T-cell (primary cell): ENCODE measurements at regions of chr13 and their contacts with region 1.

Region 1: DNA sequence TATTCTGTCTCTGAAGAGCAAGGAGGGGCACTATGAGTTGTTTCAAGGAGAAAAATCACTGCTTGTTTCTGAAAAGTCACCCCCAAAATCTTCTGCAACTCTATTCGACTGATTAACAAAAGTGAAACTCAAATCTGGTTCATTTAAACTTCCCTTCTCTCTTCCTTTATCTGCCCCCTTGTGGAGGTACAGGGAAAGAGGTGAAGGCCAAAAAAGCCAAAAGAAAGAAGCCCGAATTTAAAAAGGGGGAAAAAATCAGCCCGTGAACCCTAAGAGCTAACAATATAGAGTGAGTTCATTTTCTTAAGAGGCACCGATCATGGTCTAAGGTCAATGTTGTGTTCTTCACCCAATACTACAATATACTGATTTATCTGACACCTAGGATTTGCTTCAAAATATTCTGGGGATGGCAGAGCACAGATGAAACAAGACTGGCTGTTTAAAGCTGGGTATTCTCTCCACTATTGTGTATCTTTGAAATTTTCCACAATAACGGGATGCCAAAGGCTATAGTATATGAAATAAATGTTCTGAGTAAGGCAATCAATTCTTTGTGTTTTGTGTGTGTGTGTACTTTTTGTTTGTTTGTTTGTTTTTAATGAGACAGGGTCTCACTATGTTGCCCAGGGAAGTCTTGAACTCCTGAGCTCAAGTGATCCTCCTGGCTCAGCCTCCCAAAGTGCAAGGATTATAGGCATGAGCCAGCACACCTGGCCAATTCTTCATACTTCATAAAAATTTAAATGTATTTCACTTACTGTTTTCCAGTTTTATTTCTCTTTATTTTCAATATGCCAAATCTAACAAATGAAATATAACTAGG is 55.0 kb upstream of the EEF1AKMT1 start:
- DNase-seq: peak in 27 of 35 experiments; percentile 2 to 78 (median 23)
- ATAC-seq: peak; percentile 65 to 86 (median 80)
- H3K4me3 ChIP-seq: no peak overlapping the region
- H3K4me3 Mint-ChIP-seq: peak overlapping the region; percentile 10 to 44 (median 32)
- H3K27ac ChIP-seq: peak overlapping the region; percentile 42
- H3K27ac Mint-ChIP-seq: peak overlapping the region; percentile 62 to 85
- H3K4me1 ChIP-seq: peaks cover 0 to 2% of the 10 kb centered on the region in 2 experiments
- H3K4me1 Mint-ChIP-seq: peaks cover 7 to 17% (median 8%) of the 10 kb centered on the region in 3 donors
- H3K27me3 ChIP-seq: no peaks in the 10 kb centered on the region
- H3K27me3 Mint-ChIP-seq: no peaks in the 10 kb centered on the region

Region 2: DNA sequence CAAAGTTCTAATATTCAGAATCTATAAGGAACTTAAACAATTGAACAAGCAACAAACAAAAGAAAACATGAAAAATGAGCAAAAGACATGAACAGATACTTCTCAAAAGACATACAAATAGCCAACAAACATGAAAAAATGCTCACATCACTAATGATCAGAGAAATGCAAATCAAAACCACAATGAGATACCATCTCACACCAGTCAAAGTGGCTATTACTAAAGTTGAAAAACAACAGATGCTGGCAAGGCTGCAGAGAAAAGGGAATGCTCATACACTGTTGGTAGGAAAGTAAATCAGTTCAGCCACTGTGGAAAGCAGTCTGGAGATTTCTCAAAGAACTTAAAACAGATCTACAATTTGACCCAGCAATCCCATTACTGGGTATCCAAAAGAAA is 377.4 kb before region 1 on chr13:
- CTCF ChIA-PET with region 1: no interaction called
- POLR2A ChIA-PET with region 1: interaction called in 1 of 2 experiments, 12 read pairs
- DNase-seq: no peak
- ATAC-seq: no peak
- H3K4me3 ChIP-seq: no peak overlapping the region
- H3K4me3 Mint-ChIP-seq: no peak overlapping the region
- H3K27ac ChIP-seq: no peak overlapping the region
- H3K27ac Mint-ChIP-seq: no peak overlapping the region
- H3K4me1 ChIP-seq: no peaks in the 10 kb centered on the region
- H3K4me1 Mint-ChIP-seq: peaks cover 11 to 18% (median 14%) of the 10 kb centered on the region in 3 donors
- H3K27me3 ChIP-seq: no peaks in the 10 kb centered on the region
- H3K27me3 Mint-ChIP-seq: no peaks in the 10 kb centered on the region

Region 3: DNA sequence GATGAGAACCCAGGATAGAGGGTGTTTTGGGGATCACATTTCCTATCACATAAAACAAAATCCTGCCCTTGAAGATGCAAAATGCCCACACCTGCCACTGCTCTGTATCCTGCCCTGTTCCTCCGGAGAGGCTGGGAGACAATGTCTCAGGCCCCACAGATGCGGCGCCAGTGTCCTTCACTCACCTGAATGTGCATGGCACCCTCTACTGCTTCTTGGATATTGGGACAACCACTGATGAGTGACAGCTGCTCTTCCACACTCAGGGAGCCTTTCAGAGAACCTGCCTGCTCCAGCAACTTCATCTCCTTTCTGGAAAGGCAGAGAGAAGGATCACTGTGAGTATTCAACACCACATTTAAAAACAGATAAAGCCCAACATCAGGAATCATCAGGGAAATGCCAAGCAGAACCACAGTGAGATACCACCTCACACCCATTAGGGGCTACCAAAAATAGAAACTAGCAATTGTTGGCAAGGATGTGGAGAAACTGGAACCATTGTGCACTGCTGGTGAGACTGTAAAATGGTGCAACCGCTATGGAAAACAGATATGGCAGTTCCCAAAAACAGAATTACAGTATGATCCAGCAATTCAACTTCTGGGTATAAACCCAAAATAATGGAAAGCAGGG is 339.4 kb before region 1 on chr13:
- CTCF ChIA-PET with region 1: interaction called, 10 to 73 read pairs
- POLR2A ChIA-PET with region 1: interaction called in 1 of 2 experiments, 3 read pairs
- DNase-seq: peak in 16 of 35 experiments; percentile 10 to 73 (median 42)
- ATAC-seq: peak in 3 of 4 experiments; percentile 65 to 83 (median 73)
- H3K4me3 ChIP-seq: no peak overlapping the region
- H3K4me3 Mint-ChIP-seq: no peak overlapping the region
- H3K27ac ChIP-seq: no peak overlapping the region
- H3K27ac Mint-ChIP-seq: no peak overlapping the region
- H3K4me1 ChIP-seq: peaks cover 3 to 4% of the 10 kb centered on the region in 2 experiments
- H3K4me1 Mint-ChIP-seq: peaks cover 2 to 12% (median 2%) of the 10 kb centered on the region in 3 donors
- H3K27me3 ChIP-seq: no peaks in the 10 kb centered on the region
- H3K27me3 Mint-ChIP-seq: no peaks in the 10 kb centered on the region

Region 4: DNA sequence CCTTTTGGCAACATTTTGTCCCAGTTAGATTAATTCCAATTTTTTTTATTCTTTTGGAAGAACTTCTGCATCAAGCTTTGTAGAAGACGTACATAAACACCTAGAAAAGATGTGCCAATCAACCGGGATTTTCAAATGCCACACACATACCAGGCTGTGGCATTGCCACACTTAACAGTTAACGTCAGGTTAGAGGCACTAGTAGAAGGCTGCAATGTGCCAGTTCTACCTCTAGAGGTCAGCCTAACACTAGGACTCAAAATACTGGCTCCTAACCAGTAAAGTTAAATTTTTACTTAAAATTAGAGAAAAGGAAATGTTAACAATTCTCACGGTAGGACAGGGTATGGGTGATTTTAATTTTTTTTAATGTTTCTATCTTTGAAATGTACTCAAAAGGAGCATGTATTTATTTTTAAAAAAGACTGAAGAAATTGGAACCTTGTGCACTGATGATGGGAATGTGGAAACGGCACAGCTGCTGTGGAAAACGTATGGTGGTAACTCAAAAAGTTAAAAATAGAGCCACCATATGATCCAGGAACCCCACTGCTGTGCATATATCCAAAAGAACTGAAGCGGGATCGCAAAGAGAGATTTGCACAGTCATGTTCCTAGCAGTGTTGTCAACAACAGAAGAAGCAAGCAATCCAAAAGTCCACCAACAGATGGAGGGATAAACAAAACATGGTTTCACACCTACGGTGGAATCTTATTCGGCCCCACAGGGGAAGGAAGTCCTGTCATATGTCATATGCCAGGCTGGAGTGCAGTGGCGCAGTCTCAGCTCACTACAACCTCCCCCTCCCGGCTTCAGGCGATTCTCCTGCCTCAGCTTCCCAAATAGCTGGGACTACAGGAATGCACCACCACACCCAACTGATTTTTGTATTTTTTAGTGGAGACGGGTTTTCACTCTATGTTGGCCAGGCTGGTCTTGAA is 333.4 kb before region 1 on chr13:
- CTCF ChIA-PET with region 1: interaction called, 10 to 73 read pairs
- POLR2A ChIA-PET with region 1: interaction called in 1 of 2 experiments, 3 read pairs
- DNase-seq: peak in 33 of 35 experiments; percentile 18 to 81 (median 51)
- ATAC-seq: peak; percentile 80 to 91 (median 85)
- H3K4me3 ChIP-seq: no peak overlapping the region
- H3K4me3 Mint-ChIP-seq: no peak overlapping the region
- H3K27ac ChIP-seq: no peak overlapping the region
- H3K27ac Mint-ChIP-seq: no peak overlapping the region
- H3K4me1 ChIP-seq: peaks cover 0 to 4% of the 10 kb centered on the region in 2 experiments
- H3K4me1 Mint-ChIP-seq: peaks cover 6 to 7% (median 7%) of the 10 kb centered on the region in 3 donors
- H3K27me3 ChIP-seq: no peaks in the 10 kb centered on the region
- H3K27me3 Mint-ChIP-seq: no peaks in the 10 kb centered on the region

Region 5: DNA sequence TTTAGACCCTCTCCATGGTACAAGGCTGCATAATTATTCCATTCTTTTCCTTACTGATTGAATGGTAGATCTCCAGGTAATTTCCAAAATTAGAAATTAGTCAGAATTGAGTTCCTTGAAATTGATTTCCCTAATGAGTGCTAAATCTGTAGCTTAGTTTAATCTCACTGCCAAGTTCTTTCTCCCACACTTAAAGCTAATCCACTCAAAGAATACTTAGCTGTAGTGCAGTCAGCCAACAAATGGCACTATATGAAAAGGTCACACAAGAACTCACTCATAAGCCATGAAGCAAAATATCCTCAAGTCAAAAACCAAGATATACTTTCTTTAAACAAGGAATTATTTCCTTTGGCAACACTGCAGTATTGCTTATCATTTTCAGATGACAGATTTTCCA is 11.8 kb after region 1 on chr13:
- CTCF ChIA-PET with region 1: interaction called, 9 to 13 read pairs
- POLR2A ChIA-PET with region 1: interaction called in 1 of 2 experiments, 3 read pairs
- DNase-seq: no peak
- ATAC-seq: no peak
- H3K4me3 ChIP-seq: no peak overlapping the region
- H3K4me3 Mint-ChIP-seq: no peak overlapping the region
- H3K27ac ChIP-seq: no peak overlapping the region
- H3K27ac Mint-ChIP-seq: no peak overlapping the region
- H3K4me1 ChIP-seq: no peaks in the 10 kb centered on the region
- H3K4me1 Mint-ChIP-seq: no peaks in the 10 kb centered on the region
- H3K27me3 ChIP-seq: no peaks in the 10 kb centered on the region
- H3K27me3 Mint-ChIP-seq: no peaks in the 10 kb centered on the region

Region 6: DNA sequence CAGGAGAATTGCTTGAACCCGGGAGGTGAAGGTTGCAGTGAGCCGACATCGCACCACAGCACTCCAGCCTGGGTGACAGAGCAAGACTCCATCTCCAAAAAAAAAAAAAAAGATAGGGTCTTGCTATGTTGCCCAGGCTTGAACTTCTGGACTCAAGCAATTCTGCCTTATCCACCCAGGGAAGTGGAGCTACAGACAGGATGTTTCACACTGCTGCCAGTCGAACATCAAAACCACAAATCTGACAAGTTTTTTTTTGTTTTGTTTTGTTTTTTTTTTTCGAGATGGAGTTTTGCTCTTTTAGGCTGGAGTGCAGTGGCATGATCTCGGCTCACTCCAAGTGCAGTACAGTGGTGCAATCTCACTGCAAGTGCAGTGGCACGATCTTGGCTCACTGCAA is 63.0 kb after region 1 on chr13:
- CTCF ChIA-PET with region 1: no interaction called
- POLR2A ChIA-PET with region 1: interaction called in 1 of 2 experiments, 16 read pairs
- DNase-seq: peak in 6 of 35 experiments; percentile 3 to 56 (median 9)
- ATAC-seq: peak in 3 of 4 experiments; percentile 49 to 70 (median 63)
- H3K4me3 ChIP-seq: no peak overlapping the region
- H3K4me3 Mint-ChIP-seq: peak overlapping the region in 1 of 3 donors; percentile 5
- H3K27ac ChIP-seq: no peak overlapping the region
- H3K27ac Mint-ChIP-seq: no peak overlapping the region
- H3K4me1 ChIP-seq: peaks cover 0 to 22% of the 10 kb centered on the region in 2 experiments
- H3K4me1 Mint-ChIP-seq: peaks cover 40 to 51% (median 47%) of the 10 kb centered on the region in 3 donors
- H3K27me3 ChIP-seq: no peaks in the 10 kb centered on the region
- H3K27me3 Mint-ChIP-seq: no peaks in the 10 kb centered on the region

Region 7: DNA sequence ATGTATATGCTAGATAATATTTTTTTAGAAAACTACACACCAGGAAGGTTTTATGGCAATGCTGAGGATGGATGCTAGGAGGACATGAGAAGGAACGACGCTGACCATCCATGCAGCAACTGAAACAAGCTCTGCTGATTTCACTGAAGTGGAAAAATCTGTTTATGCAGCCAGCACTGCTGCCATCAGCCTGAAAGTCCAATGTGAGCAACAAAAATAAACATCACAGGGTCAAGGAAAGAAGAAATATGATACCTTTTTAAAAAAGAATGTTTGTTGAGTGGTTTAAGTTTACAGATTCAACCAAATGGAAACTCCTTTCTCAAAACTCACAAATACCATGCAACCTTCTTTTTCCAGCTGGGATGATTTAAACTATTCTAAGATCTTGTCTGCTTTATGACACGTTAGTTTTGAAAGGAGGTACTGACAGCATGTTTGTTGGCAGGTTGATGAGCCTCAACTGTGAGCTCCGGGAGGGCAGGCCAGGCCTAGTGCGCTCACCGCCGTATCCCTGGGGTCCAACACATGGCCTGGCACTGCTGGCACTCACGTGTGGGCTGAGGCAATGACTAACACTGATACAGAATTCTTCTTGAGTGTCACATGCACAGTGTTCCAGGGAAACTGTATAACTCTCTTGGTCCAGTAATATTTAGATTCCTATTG is 185.9 kb after region 1 on chr13:
- CTCF ChIA-PET with region 1: no interaction called
- POLR2A ChIA-PET with region 1: no interaction called
- DNase-seq: no peak
- ATAC-seq: no peak
- H3K4me3 ChIP-seq: no peak overlapping the region
- H3K4me3 Mint-ChIP-seq: no peak overlapping the region
- H3K27ac ChIP-seq: no peak overlapping the region
- H3K27ac Mint-ChIP-seq: no peak overlapping the region
- H3K4me1 ChIP-seq: peaks cover 0 to 3% of the 10 kb centered on the region in 2 experiments
- H3K4me1 Mint-ChIP-seq: peaks cover 5 to 30% (median 26%) of the 10 kb centered on the region in 3 donors
- H3K27me3 ChIP-seq: no peaks in the 10 kb centered on the region
- H3K27me3 Mint-ChIP-seq: no peaks in the 10 kb centered on the region